CD4-positive, alpha-beta memory T cell (primary cell): ENCODE measurements at regions of chr9 and their contacts with region 1.

Region 1: GRCh38 chr9:132768932-132769905 is 99.0 kb downstream of the GTF3C4 start:
- DNase-seq: peak; percentile 57 to 75 (median 62)
- H3K4me3 ChIP-seq: peak overlapping the region; percentile 83 to 85
- H3K4me3 Mint-ChIP-seq: peak overlapping the region; percentile 95 to 100 (median 99)
- H3K27ac ChIP-seq: peak overlapping the region; percentile 68
- H3K27ac Mint-ChIP-seq: peak overlapping the region; percentile 87 to 99 (median 98)
- H3K4me1 ChIP-seq: peaks cover 16% of the 10 kb centered on the region
- H3K4me1 Mint-ChIP-seq: peaks cover 15 to 37% (median 16%) of the 10 kb centered on the region in 4 donors
- H3K27me3 ChIP-seq: no peaks in the 10 kb centered on the region
- H3K27me3 Mint-ChIP-seq: no peaks in the 10 kb centered on the region

Region 2: DNA sequence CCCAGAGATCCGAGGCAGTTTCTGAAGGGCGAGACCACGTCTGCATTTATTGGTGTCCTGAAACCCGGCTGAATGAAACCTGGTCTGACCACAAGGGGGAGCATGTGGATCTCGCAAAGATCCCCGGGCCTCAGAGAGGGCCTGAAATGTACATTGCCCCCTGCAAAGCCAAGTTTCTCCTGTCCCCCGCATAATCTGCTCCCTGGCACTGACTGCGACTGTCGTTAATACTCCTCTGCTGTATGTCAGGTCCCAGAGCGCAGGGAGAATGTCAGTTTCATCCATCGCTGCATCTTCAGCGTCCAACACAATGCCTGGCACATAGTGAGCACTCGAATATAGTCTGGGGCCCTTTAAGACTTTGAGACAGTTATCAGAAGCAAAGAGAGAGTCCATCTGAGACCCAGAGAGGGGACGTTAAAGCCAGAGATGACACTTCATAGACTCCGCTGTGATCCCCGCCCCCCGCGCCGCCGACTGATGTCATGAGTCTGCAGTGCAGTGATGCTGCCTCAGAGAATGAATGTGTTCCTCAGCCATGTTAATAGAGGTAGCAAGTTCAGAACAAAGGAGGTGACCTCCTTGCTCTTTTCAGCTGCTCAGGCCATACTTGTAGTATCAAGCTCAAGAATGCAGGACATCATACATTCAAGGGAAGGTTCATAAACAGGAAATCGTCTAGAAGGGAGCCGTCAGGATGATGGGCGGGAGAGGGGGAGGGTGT is 261.3 kb before region 1 on chr9:
- CTCF ChIA-PET with region 1: interaction called, 4 read pairs
- POLR2A ChIA-PET with region 1: no interaction called
- intact Hi-C with region 1: loop called (anchors 1 kb)
- DNase-seq: peak; percentile 46 to 59 (median 56)
- H3K4me3 ChIP-seq: no peak overlapping the region
- H3K4me3 Mint-ChIP-seq: peak overlapping the region in 4 of 8 donors; percentile 33 to 64 (median 57)
- H3K27ac ChIP-seq: no peak overlapping the region
- H3K27ac Mint-ChIP-seq: peak overlapping the region in 3 of 7 donors; percentile 36 to 64 (median 41)
- H3K4me1 ChIP-seq: peaks cover 21% of the 10 kb centered on the region
- H3K4me1 Mint-ChIP-seq: peaks cover 11 to 22% (median 18%) of the 10 kb centered on the region in 4 donors
- H3K27me3 ChIP-seq: peaks cover 4% of the 10 kb centered on the region
- H3K27me3 Mint-ChIP-seq: peaks cover 1 to 4% of the 10 kb centered on the region in 2 donors